Activated naive CD4-positive, alpha-beta T cell treated with anti-CD3 and anti-CD28 coated beads for 36 hours (primary cell): ENCODE measurements at regions of chr6 and their contacts with region 1.

Region 1: GRCh38 chr6:79949233-79949632 is 1.9 kb upstream of the ELOVL4 start:
- DNase-seq: peak; percentile 83
- H3K4me3 Mint-ChIP-seq: no peak overlapping the region
- H3K27ac Mint-ChIP-seq: no peak overlapping the region
- H3K4me1 Mint-ChIP-seq: peaks cover 14% of the 10 kb centered on the region
- H3K27me3 Mint-ChIP-seq: peaks cover 34% of the 10 kb centered on the region

Region 2: GRCh38 chr6:80004173-80005072 is 55.2 kb after region 1 on chr6 and contains the start of gene TTK:
- CTCF ChIA-PET with region 1: interaction called, 8 read pairs
- intact Hi-C with region 1: loop called (anchors 1 kb)
- DNase-seq: peak; percentile 93
- H3K4me3 Mint-ChIP-seq: peak within 1 kb of the TSS; percentile 95
- H3K27ac Mint-ChIP-seq: peak within 1 kb of the TSS; percentile 89
- H3K4me1 Mint-ChIP-seq: peaks cover 16% of the 10 kb centered on the region
- H3K27me3 Mint-ChIP-seq: peaks cover 1% of the 10 kb centered on the region
- total RNA-seq, gene TTK: 45.9 to 51.1 TPM

Region 3: GRCh38 chr6:80094017-80094416 is 144.8 kb after region 1 on chr6:
- CTCF ChIA-PET with region 1: interaction called, 36 read pairs
- intact Hi-C with region 1: loop called (anchors 1 kb)
- DNase-seq: peak; percentile 14
- H3K4me3 Mint-ChIP-seq: no peak overlapping the region
- H3K27ac Mint-ChIP-seq: no peak overlapping the region
- H3K4me1 Mint-ChIP-seq: no peaks in the 10 kb centered on the region
- H3K27me3 Mint-ChIP-seq: no peaks in the 10 kb centered on the region

Region 4: DNA sequence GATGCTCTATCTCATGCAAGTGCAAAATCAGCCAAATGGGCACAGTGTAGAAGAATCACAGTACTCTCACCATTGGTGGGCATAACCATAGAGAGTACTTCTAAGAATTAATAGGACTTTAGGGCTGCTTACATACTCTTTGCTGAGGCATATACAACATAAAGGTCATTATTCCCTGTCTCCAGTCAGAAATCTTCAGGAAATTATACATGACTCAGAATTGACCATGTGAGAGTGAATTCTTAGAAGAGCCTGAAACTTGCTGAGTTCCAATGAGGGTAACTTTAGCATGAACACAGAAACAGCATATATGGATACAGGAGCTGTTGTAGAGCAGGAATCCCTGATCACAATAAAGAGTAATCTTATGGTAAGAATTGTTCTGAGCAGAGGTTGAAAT is 1304.6 kb after region 1 on chr6:
- CTCF ChIA-PET with region 1: no interaction called
- intact Hi-C with region 1: no loop called
- DNase-seq: no peak
- H3K4me3 Mint-ChIP-seq: no peak overlapping the region
- H3K27ac Mint-ChIP-seq: no peak overlapping the region
- H3K4me1 Mint-ChIP-seq: no peaks in the 10 kb centered on the region
- H3K27me3 Mint-ChIP-seq: no peaks in the 10 kb centered on the region